Transverse colon (tissue), 4 donors: ENCODE measurements at regions of chr18 and their contacts with region 1.

Region 1: GRCh38 chr18:23422672-23423418 is 30.2 kb upstream of the RIOK3 start:
- DNase-seq: peak; percentile 77
- H3K4me3 ChIP-seq: no peak overlapping the region
- H3K27ac ChIP-seq: peak overlapping the region in 3 of 4 donors; percentile 50 to 72 (median 62)
- H3K4me1 ChIP-seq: peaks cover 0 to 16% (median 6%) of the 10 kb centered on the region in 4 donors
- H3K27me3 ChIP-seq: no peaks in the 10 kb centered on the region
- CTCF ChIP-seq: no peak
- EP300 ChIP-seq: no peak
- POLR2A ChIP-seq: no peak

Region 2: GRCh38 chr18:22412176-22412908 is 1010.5 kb before region 1 on chr18:
- in situ Hi-C with region 1: no loop called
- intact Hi-C with region 1: no loop called
- DNase-seq: no peak
- H3K4me3 ChIP-seq: no peak overlapping the region
- H3K27ac ChIP-seq: no peak overlapping the region
- H3K4me1 ChIP-seq: no peaks in the 10 kb centered on the region
- H3K27me3 ChIP-seq: no peaks in the 10 kb centered on the region
- CTCF ChIP-seq: no peak
- EP300 ChIP-seq: no peak
- POLR2A ChIP-seq: no peak

Region 3: GRCh38 chr18:22778996-22779395 is 643.8 kb before region 1 on chr18:
- in situ Hi-C with region 1: loop called in 2 of 4 experiments (anchors 25 kb)
- intact Hi-C with region 1: no loop called
- DNase-seq: no peak
- H3K4me3 ChIP-seq: no peak overlapping the region
- H3K27ac ChIP-seq: no peak overlapping the region
- H3K4me1 ChIP-seq: no peaks in the 10 kb centered on the region
- H3K27me3 ChIP-seq: no peaks in the 10 kb centered on the region
- CTCF ChIP-seq: no peak
- EP300 ChIP-seq: no peak
- POLR2A ChIP-seq: no peak